ENCODE measurements at regions of chr2 and their contacts with region 1.

Region 1: DNA sequence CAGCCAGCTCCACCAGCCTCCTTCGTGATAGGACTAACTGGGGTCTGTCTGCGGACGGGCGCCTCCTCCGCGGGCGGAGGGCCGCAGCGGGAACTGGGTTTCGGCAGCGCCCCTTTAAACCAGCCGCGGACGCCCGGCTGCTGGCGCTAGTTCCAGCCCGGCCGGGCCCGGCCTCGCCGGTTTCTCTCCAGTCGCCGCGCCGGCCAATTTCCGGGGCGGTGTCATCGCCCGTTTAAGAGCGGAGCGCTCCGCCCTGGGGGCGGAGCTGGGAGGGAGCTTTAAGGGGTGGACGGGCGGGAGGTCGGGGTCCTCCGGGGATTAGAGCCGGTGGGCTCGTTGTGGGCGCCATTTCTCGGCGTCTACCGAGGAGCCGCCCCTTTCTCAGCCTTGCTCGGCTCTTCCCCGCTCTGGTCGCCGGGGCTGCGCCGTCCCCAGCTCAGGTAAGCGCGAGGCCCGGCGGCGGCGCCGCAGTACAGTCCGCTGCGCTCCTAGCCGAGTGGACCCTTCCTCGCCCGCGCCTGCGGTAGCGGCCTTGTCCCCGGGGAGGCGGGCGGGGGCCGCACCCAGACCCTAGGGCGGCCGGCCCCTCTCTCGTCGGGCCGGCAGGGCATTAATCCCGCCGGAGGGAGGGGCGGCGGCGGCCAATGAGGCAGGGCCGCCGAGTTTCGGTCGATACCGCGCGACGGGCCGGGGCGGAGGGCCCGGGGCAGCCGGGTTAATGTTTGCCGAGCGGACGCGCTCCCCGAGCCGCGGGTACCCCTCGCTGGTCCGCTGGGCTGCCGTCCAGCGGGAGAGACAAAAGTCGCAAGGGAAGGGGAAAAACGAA is at the start of gene EPB41L5:
- DNase-seq: peak; percentile 50 to 88 (median 80)
- ATAC-seq: peak; percentile 92
- H3K4me3 ChIP-seq: peak within 1 kb of the TSS; percentile 68 to 82
- H3K4me3 Mint-ChIP-seq: peak within 1 kb of the TSS; percentile 85
- H3K27ac ChIP-seq: peak within 1 kb of the TSS; percentile 32 to 44
- H3K27ac Mint-ChIP-seq: peak within 1 kb of the TSS; percentile 62
- H3K4me1 ChIP-seq: peaks cover 18% of the 10 kb centered on the region
- H3K4me1 Mint-ChIP-seq: peaks cover 26% of the 10 kb centered on the region
- H3K27me3 ChIP-seq: no peaks in the 10 kb centered on the region
- H3K27me3 Mint-ChIP-seq: no peaks in the 10 kb centered on the region
- CTCF ChIP-seq: no peak
- total RNA-seq, gene EPB41L5: 5.1 to 5.8 TPM

Region 2: GRCh38 chr2:119929537-119929936 is 83.4 kb before region 1 on chr2:
- CTCF ChIA-PET with region 1: no interaction called
- POLR2A ChIA-PET with region 1: interaction called, 3 read pairs
- intact Hi-C with region 1: loop called in 1 of 2 experiments (anchors 5 kb)
- DNase-seq: peak in 6 of 9 experiments; percentile 15 to 83 (median 26)
- ATAC-seq: peak; percentile 91
- H3K4me3 ChIP-seq: peak overlapping the region; percentile 48 to 63
- H3K4me3 Mint-ChIP-seq: peak overlapping the region; percentile 75
- H3K27ac ChIP-seq: peak overlapping the region; percentile 60 to 70
- H3K27ac Mint-ChIP-seq: peak overlapping the region; percentile 97
- H3K4me1 ChIP-seq: peaks cover 70% of the 10 kb centered on the region
- H3K4me1 Mint-ChIP-seq: peaks cover 73% of the 10 kb centered on the region
- H3K27me3 ChIP-seq: no peaks in the 10 kb centered on the region
- H3K27me3 Mint-ChIP-seq: no peaks in the 10 kb centered on the region
- CTCF ChIP-seq: no peak

Region 3: GRCh38 chr2:119983108-119983507 is 29.9 kb before region 1 on chr2:
- CTCF ChIA-PET with region 1: no interaction called
- POLR2A ChIA-PET with region 1: no interaction called
- intact Hi-C with region 1: loop called in 1 of 2 experiments (anchors 5 kb)
- DNase-seq: no peak
- ATAC-seq: no peak
- H3K4me3 ChIP-seq: no peak overlapping the region
- H3K4me3 Mint-ChIP-seq: no peak overlapping the region
- H3K27ac ChIP-seq: no peak overlapping the region
- H3K27ac Mint-ChIP-seq: no peak overlapping the region
- H3K4me1 ChIP-seq: no peaks in the 10 kb centered on the region
- H3K4me1 Mint-ChIP-seq: peaks cover 10% of the 10 kb centered on the region
- H3K27me3 ChIP-seq: no peaks in the 10 kb centered on the region
- H3K27me3 Mint-ChIP-seq: no peaks in the 10 kb centered on the region
- CTCF ChIP-seq: no peak

Region 4: DNA sequence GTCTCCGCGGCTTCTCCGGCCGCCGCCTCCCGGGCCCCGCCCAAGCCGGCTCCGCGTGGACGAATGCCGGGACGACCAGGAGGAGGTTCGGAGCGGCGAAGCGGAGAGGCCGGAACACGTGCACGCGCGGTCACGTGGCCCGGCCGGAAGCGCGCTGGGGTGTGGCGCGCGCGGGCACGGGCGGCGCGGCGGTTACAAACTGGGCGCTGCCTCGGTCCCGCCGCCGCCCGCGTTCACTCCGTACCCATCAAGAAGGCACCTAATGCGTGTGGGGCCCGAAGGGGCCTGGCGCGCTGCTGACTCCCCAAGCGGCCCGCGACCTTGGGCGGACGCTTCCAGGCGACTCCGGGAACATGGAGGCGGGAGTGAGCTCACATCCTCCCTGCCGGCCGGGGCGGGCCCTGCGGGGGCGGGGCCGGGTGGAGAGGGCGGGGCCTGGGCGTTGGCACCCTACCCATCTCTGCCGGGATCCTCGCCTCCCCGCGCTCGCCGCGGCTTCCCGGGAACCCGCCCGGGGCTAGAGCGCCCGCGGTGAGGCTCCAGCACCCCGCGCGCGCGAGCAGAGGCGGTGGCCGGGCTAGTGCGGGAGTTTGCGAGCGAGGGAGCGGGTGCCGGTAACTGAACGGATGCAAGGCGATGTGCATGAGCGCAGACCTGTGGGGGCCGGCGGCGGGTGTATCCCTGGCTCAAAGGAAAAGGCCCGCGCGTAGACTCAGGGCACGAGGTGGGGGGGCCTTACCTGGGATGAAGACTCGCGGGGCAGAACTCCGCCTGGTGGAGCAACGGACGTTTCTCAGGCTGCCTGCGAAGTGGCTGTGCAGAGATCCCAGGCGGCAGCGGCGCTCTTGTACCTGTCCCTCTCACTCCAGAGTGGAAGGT is 210.3 kb after region 1 on chr2 and contains the start of gene TMEM185B:
- CTCF ChIA-PET with region 1: no interaction called
- POLR2A ChIA-PET with region 1: no interaction called
- intact Hi-C with region 1: loop called in 1 of 2 experiments (anchors 1 kb)
- DNase-seq: peak; percentile 81 to 91 (median 87)
- ATAC-seq: peak; percentile 95
- H3K4me3 ChIP-seq: peak within 1 kb of the TSS; percentile 80 to 87
- H3K4me3 Mint-ChIP-seq: peak within 1 kb of the TSS; percentile 87
- H3K27ac ChIP-seq: peak within 1 kb of the TSS; percentile 90 to 95
- H3K27ac Mint-ChIP-seq: peak within 1 kb of the TSS; percentile 93
- H3K4me1 ChIP-seq: peaks cover 36% of the 10 kb centered on the region
- H3K4me1 Mint-ChIP-seq: peaks cover 60% of the 10 kb centered on the region
- H3K27me3 ChIP-seq: no peaks in the 10 kb centered on the region
- H3K27me3 Mint-ChIP-seq: no peaks in the 10 kb centered on the region
- CTCF ChIP-seq: no peak
- total RNA-seq, gene TMEM185B: 21.3 to 23.5 TPM

Region 5: DNA sequence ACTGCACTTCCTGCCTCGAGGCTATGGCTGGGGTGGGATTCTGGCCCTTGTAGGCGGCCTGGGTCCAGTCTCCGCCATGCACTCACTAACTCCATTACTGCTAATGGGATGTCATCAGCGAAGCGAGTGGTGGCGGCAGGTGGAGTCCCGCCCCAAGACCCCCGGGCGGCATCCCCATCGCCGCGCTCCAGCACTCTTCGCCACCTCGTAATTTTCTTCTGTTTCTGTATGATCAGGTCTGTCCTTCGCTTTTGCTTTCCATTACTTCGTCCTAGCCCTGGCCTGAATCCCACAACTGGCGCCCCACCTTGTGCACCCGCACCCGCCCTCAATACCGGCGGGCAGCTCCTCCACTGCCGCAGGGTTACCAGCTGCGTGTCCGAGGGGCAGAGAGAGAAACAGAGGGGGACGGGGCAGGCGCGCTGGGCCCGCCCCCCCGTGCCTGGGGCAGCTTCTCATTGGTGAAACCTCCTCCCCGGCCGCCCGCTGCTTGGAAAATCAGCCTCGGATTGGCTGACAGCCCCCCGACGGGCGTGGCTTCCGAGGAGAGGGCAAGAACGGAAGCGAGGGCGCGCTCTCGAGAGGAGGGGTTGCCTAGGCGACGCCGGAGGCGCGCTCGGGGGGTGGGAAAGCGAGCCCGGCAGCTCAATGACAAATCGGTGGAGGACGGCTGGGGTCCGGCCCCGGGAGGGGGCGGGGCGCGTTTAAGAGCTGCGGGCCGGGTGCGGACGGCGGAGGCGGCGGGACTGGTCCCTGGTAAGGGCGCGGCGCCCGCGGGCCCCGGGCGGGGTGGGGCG is 239.4 kb after region 1 on chr2 and contains the start of gene RALB:
- CTCF ChIA-PET with region 1: no interaction called
- POLR2A ChIA-PET with region 1: no interaction called
- intact Hi-C with region 1: loop called (anchors 1 to 10 kb)
- DNase-seq: peak; percentile 96 to 99 (median 98)
- ATAC-seq: peak; percentile 95
- H3K4me3 ChIP-seq: peak within 1 kb of the TSS; percentile 87 to 100
- H3K4me3 Mint-ChIP-seq: peak within 1 kb of the TSS; percentile 99
- H3K27ac ChIP-seq: peak within 1 kb of the TSS; percentile 63 to 85
- H3K27ac Mint-ChIP-seq: peak within 1 kb of the TSS; percentile 94
- H3K4me1 ChIP-seq: peaks cover 18% of the 10 kb centered on the region
- H3K4me1 Mint-ChIP-seq: peaks cover 34% of the 10 kb centered on the region
- H3K27me3 ChIP-seq: no peaks in the 10 kb centered on the region
- H3K27me3 Mint-ChIP-seq: peaks cover 5% of the 10 kb centered on the region
- CTCF ChIP-seq: no peak
- total RNA-seq, gene RALB: 3.1 to 3.2 TPM

Measured in CD8-positive, alpha-beta T cell (primary cell).